ENCODE measurements at regions of chr6 and their contacts with region 1.

Region 1: GRCh38 chr6:107459283-107460082 is at the start of gene PDSS2:
- DNase-seq: peak; percentile 93

Region 2: DNA sequence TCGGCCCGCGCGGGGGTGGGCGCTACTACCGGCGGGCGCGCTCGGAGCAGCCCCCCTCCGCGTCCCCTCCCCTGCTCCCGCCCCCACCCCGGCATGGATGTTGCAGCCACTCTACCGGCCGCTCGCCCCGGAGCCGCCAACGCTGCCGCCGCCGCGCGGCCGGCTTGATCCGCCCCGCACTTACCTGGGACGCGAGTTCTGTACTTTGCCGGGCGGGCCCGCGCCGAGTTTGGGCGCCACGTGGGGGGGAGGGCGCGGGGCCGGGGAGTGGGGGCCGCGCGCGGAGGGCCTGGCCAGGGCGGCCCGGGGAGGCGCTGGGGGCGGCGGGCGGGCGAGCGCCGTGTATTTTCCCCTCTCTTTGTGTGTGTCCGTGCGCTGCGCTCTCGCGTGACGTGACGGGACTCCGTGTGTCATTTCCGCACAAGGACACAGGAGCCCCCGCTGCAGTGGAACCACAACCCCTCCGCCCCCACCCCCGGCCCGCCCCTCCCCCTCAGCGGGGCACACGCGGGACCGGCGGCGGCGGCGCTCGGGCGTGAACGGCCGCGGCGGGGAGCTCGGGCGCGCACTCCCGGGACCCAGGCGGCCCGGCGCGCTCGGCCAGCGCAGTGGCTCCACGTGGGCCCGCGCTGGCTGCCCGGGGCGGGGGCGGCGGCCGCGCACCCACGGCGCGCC is 344.4 kb before region 1 on chr6 and contains the start of gene BEND3:
- CTCF ChIA-PET with region 1: interaction called, 3 read pairs
- POLR2A ChIA-PET with region 1: interaction called, 13 read pairs
- DNase-seq: peak; percentile 52

Region 3: DNA sequence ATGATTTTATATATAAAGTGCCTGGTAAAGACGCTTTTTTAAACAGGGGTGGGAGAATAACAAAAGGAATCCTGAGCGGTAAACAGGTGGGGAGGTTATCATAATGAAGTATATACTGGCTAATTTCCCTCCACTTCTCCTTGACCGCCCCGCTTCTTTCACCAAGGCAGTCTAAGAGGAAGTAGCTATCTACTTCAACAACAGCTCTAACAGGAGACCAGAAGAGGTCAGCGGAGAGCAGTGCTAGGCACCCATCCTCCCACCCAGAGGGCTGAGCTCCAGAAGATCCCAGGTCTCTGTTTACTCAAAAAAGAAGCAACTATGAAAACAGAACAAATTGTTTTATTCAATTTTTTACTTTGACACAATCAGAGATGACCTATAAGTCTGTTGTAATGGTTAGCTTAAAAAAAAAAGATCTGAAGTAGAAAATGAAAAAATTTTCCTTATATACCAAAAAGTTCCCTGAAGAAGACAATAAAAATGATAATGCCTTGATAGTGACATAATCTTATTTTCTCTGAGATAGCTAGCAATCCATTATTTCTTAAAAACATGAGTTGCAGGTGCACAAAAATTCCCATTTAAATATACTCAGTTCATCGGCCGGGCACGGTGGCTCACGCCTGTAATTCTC is 141.3 kb before region 1 on chr6:
- CTCF ChIA-PET with region 1: interaction called, 7 read pairs
- POLR2A ChIA-PET with region 1: interaction called, 13 read pairs
- DNase-seq: peak; percentile 72

Region 4: DNA sequence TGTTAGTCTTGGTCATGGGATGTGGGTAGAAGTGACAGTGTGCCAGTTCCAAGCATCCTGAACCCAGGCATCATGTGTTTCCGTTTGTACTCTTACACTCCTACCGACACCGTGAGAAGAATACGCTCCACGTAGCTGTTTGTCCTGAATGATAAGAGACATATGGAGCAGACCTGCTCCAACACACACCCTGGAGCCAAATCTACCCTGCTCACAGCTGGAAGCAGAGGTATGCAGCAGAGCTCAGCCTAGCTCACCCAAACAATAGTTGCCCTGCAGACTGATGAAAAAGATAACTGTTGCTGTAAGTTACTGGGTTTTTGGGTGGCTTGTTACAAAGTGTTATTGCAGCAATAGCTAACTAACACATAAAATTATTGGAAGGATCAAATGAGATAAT is 14.2 kb after region 1 on chr6:
- CTCF ChIA-PET with region 1: interaction called, 7 read pairs
- POLR2A ChIA-PET with region 1: interaction called, 43 read pairs
- DNase-seq: no peak

Region 5: DNA sequence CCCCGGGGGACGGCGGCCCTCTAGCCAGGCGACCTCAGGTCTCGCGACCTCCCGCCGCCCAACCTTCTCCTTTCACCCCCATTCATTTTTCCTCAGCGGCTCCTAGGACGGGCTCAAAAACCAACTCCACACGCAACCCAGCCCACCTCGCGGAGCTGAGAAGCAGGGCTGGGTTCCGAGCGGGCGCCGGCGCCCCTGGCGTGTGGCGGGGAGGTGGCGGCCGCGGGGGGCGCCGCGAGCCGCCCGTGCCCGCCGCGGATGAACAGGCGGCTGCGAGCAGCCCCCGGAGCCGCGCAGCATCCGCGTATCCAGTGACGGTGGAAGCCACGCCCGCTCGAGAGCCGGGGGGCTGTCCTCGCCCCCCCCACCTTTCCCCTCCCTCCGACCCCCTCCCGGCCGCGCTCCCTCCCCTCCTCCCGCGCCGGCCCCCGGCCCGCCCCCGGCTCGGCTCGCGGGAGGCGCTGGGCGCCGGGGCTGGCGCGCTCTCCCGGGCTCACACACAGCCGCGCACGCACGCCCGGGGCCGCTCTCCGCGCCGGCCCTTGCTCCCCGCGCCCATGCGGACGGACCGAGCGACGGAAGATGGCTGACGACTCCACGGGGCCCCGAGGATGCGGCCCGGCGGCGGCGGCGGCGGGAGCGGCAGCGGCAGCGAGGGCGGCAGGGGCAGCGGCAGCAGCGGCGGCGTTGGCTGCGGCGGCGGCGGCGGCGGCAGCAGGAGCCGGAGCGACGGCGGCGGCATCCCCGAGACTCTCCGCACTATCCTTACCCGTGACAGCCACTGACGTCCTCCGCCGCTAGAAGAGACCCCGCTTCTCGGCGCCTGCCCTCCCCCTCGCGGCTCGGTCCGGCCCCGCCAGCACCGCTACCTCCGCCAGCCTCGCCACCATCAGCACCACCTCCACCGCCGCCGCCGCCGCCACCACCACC is 30.4 kb after region 1 on chr6 and contains the start of gene SOBP:
- CTCF ChIA-PET with region 1: interaction called, 6 read pairs
- POLR2A ChIA-PET with region 1: interaction called, 78 read pairs
- DNase-seq: peak; percentile 75

Measured in HEK293T (cell line).